Endothelial cell of umbilical vein (primary cell): ENCODE measurements at regions of chr6 and their contacts with region 1.

Region 1: GRCh38 chr6:43369174-43370022 is at the start of gene ZNF318:
- DNase-seq: peak; percentile 95
- H3K4me3 ChIP-seq: peak within 1 kb of the TSS; percentile 31 to 66 (median 63)
- H3K27ac ChIP-seq: peak within 1 kb of the TSS; percentile 51
- H3K4me1 ChIP-seq: peaks cover 8% of the 10 kb centered on the region
- H3K27me3 ChIP-seq: no peaks in the 10 kb centered on the region
- CTCF ChIP-seq: no peak
- POLR2A ChIP-seq: peak; percentile 73
- total RNA-seq, gene ZNF318: 13.0 and 13.6 TPM in 2 replicates

Region 2: GRCh38 chr6:43247113-43247999 is 122.0 kb before region 1 on chr6:
- CTCF ChIA-PET with region 1: no interaction called
- POLR2A ChIA-PET with region 1: no interaction called
- dilution Hi-C with region 1: no loop called
- intact Hi-C with region 1: no loop called
- DNase-seq: peak; percentile 66
- H3K4me3 ChIP-seq: peak overlapping the region; percentile 5 to 44 (median 27)
- H3K27ac ChIP-seq: no peak overlapping the region
- H3K4me1 ChIP-seq: peaks cover 4% of the 10 kb centered on the region
- H3K27me3 ChIP-seq: peaks cover 35 to 51% of the 10 kb centered on the region in 2 experiments
- CTCF ChIP-seq: no peak
- POLR2A ChIP-seq: no peak

Region 3: GRCh38 chr6:43355862-43356590 is 13.4 kb before region 1 on chr6:
- CTCF ChIA-PET with region 1: interaction called, 10 read pairs
- POLR2A ChIA-PET with region 1: no interaction called
- dilution Hi-C with region 1: no loop called
- intact Hi-C with region 1: no loop called
- DNase-seq: peak; percentile 24
- H3K4me3 ChIP-seq: no peak overlapping the region
- H3K27ac ChIP-seq: no peak overlapping the region
- H3K4me1 ChIP-seq: peaks cover 7% of the 10 kb centered on the region
- H3K27me3 ChIP-seq: no peaks in the 10 kb centered on the region
- CTCF ChIP-seq: peak in 1 of 2 donors; percentile 23
- POLR2A ChIP-seq: no peak

Region 4: GRCh38 chr6:43402820-43403219 is 33.4 kb after region 1 on chr6:
- CTCF ChIA-PET with region 1: interaction called, 11 read pairs
- POLR2A ChIA-PET with region 1: no interaction called
- dilution Hi-C with region 1: no loop called
- intact Hi-C with region 1: no loop called
- DNase-seq: no peak
- H3K4me3 ChIP-seq: no peak overlapping the region
- H3K27ac ChIP-seq: no peak overlapping the region
- H3K4me1 ChIP-seq: no peaks in the 10 kb centered on the region
- H3K27me3 ChIP-seq: peaks cover 9% of the 10 kb centered on the region in 2 experiments
- CTCF ChIP-seq: no peak
- POLR2A ChIP-seq: no peak

Region 5: GRCh38 chr6:43427406-43428111 is 58.2 kb after region 1 on chr6 and contains the start of gene ABCC10:
- CTCF ChIA-PET with region 1: no interaction called
- POLR2A ChIA-PET with region 1: no interaction called
- dilution Hi-C with region 1: no loop called
- intact Hi-C with region 1: loop called (anchors 1 kb)
- DNase-seq: peak; percentile 95
- H3K4me3 ChIP-seq: peak within 1 kb of the TSS; percentile 14 to 66 (median 60)
- H3K27ac ChIP-seq: peak within 1 kb of the TSS; percentile 57
- H3K4me1 ChIP-seq: peaks cover 12% of the 10 kb centered on the region
- H3K27me3 ChIP-seq: no peaks in the 10 kb centered on the region
- CTCF ChIP-seq: peak in 1 of 2 donors; percentile 53
- POLR2A ChIP-seq: peak; percentile 94
- total RNA-seq, gene ABCC10: 34.8 and 37.9 TPM in 2 replicates